ENCODE measurements at regions of chr10 and their contacts with region 1.

Region 1: GRCh38 chr10:98309366-98310355 is 41.7 kb upstream of the LOXL4 start:
- DNase-seq: peak; percentile 70 to 76
- ATAC-seq: peak; percentile 93 to 97 (median 95)
- H3K4me3 ChIP-seq: peak overlapping the region in 3 of 10 donors; percentile 4 to 18 (median 8)
- H3K27ac ChIP-seq: peak overlapping the region in 2 of 10 donors; percentile 49
- H3K4me1 ChIP-seq: peaks cover 0 to 21% (median 16%) of the 10 kb centered on the region in 9 donors
- H3K27me3 ChIP-seq: peaks cover 0 to 23% (median 0%) of the 10 kb centered on the region in 7 donors
- CTCF ChIP-seq: peak; percentile 65 to 93 (median 85)

Region 2: GRCh38 chr10:97914837-97915211 is 394.8 kb before region 1 on chr10:
- intact Hi-C with region 1: loop called in 4 of 10 experiments (anchors 5 to 10 kb)
- DNase-seq: peak; percentile 69 to 80
- ATAC-seq: peak; percentile 77 to 90 (median 86)
- H3K4me3 ChIP-seq: no peak overlapping the region
- H3K27ac ChIP-seq: no peak overlapping the region
- H3K4me1 ChIP-seq: peaks cover 0 to 21% (median 9%) of the 10 kb centered on the region in 9 donors
- H3K27me3 ChIP-seq: peaks cover 0 to 8% (median 4%) of the 10 kb centered on the region in 7 donors
- CTCF ChIP-seq: peak; percentile 88 to 95 (median 90)

Region 3: GRCh38 chr10:98045785-98046389 is 263.8 kb before region 1 on chr10:
- intact Hi-C with region 1: loop called in 1 of 10 experiments (anchors 10 kb)
- DNase-seq: peak; percentile 24 to 41
- ATAC-seq: peak; percentile 13 to 72 (median 48)
- H3K4me3 ChIP-seq: no peak overlapping the region
- H3K27ac ChIP-seq: no peak overlapping the region
- H3K4me1 ChIP-seq: peaks cover 0 to 21% (median 10%) of the 10 kb centered on the region in 9 donors
- H3K27me3 ChIP-seq: peaks cover 0 to 25% (median 20%) of the 10 kb centered on the region in 7 donors
- CTCF ChIP-seq: peak; percentile 75 to 92 (median 86)

Region 4: GRCh38 chr10:98242823-98243222 is 66.8 kb before region 1 on chr10:
- intact Hi-C with region 1: loop called in 1 of 10 experiments (anchors 10 kb)
- DNase-seq: no peak
- ATAC-seq: no peak
- H3K4me3 ChIP-seq: no peak overlapping the region
- H3K27ac ChIP-seq: no peak overlapping the region
- H3K4me1 ChIP-seq: peaks cover 0 to 3% (median 0%) of the 10 kb centered on the region in 9 donors
- H3K27me3 ChIP-seq: no peaks in the 10 kb centered on the region
- CTCF ChIP-seq: peak in 8 of 9 donors; percentile 11 to 58 (median 40)

Region 5: GRCh38 chr10:98269072-98269912 is 40.4 kb before region 1 on chr10:
- intact Hi-C with region 1: loop called in 8 of 10 experiments (anchors 1 to 5 kb)
- DNase-seq: peak; percentile 84 to 86
- ATAC-seq: peak; percentile 78 to 96 (median 92)
- H3K4me3 ChIP-seq: peak overlapping the region in 7 of 10 donors; percentile 37 to 59 (median 57)
- H3K27ac ChIP-seq: peak overlapping the region in 9 of 10 donors; percentile 64 to 92 (median 83)
- H3K4me1 ChIP-seq: peaks cover 13 to 35% (median 28%) of the 10 kb centered on the region in 9 donors
- H3K27me3 ChIP-seq: peaks cover 0 to 35% (median 0%) of the 10 kb centered on the region in 7 donors
- CTCF ChIP-seq: no peak

Region 6: DNA sequence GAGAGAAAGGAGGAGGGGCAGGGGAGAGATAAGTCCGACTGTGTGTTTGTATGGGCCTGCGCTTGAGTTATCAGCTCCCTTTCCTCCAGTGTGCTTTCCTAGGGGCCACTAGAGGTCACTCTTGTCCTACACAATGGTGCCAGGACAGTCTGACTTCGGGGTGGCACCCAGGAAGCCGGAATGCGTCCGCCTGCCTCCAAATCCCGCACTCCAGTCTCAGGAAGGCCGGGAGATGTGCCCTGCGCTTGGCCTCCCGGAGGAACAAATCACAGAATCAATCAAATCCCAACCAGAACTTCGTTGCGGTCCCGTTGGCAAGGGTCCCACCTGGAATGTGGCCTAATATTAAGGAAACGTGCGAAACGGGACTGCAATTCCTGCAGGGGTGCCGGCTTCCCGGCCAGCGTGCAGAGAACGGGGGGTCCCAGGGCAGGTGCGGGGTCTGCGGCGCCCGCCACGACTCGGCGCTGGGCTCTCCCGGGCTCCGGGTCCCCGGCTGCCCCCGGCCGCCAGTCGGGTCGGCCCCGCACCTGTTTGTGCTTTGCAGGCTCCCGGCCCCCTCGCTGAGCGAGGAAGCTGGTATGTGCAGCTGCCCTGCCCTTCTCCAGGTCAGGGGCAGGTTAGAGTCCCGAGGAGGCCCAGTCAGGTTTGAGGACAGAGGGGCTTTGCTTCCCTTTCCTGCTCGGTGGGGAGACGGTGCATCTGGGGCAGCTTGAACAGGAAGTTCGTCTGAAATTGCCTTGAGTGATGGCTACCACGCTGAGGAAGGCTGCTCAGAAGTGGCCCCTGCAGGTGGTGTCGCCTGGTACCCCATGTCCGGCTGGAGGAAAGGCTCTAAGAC is 158.1 kb after region 1 on chr10:
- intact Hi-C with region 1: no loop called
- DNase-seq: peak; percentile 58 to 71
- ATAC-seq: peak; percentile 94 to 96 (median 95)
- H3K4me3 ChIP-seq: peak overlapping the region; percentile 21 to 66 (median 60)
- H3K27ac ChIP-seq: peak overlapping the region in 2 of 10 donors; percentile 35 to 40
- H3K4me1 ChIP-seq: peaks cover 0 to 33% (median 13%) of the 10 kb centered on the region in 9 donors
- H3K27me3 ChIP-seq: peaks cover 0 to 15% (median 0%) of the 10 kb centered on the region in 7 donors
- CTCF ChIP-seq: peak; percentile 59 to 91 (median 88)